ENCODE measurements at regions of chr14 and their contacts with region 1.

Region 1: DNA sequence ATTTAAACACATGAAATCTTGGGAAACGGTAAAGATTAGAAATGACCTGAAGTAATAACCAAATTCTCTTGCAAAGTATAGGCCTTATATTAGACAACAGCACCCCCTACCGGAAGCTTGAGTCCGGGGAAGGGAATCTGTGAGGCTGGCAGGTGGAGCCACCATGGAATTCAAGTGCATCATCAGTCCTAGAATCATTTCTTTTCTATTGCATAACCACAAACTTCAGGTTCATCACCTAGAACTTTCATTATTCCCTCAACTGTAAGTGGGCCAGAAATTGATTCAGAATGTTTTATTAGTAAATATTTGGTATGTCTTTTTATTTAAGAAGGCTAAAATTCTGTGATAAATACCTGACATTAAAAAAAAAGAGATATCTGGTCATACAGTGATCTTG is 48.5 kb downstream of the AP5M1 start:
- DNase-seq: peak; percentile 74
- H3K4me3 ChIP-seq: no peak overlapping the region
- H3K27ac ChIP-seq: no peak overlapping the region
- H3K4me1 ChIP-seq: no peaks in the 10 kb centered on the region
- H3K27me3 ChIP-seq: no peaks in the 10 kb centered on the region
- CTCF ChIP-seq: peak; percentile 43 to 72 (median 50)
- EP300 ChIP-seq: no peak
- POLR2A ChIP-seq: no peak

Region 2: GRCh38 chr14:56491299-56492285 is 825.7 kb before region 1 on chr14:
- intact Hi-C with region 1: loop called (anchors 2 kb)
- DNase-seq: no peak
- H3K4me3 ChIP-seq: no peak overlapping the region
- H3K27ac ChIP-seq: no peak overlapping the region
- H3K4me1 ChIP-seq: peaks cover 0 to 7% (median 0%) of the 10 kb centered on the region in 4 donors
- H3K27me3 ChIP-seq: no peaks in the 10 kb centered on the region
- CTCF ChIP-seq: peak in 3 of 4 experiments; percentile 44 to 66 (median 50)
- EP300 ChIP-seq: no peak
- POLR2A ChIP-seq: no peak

Region 3: DNA sequence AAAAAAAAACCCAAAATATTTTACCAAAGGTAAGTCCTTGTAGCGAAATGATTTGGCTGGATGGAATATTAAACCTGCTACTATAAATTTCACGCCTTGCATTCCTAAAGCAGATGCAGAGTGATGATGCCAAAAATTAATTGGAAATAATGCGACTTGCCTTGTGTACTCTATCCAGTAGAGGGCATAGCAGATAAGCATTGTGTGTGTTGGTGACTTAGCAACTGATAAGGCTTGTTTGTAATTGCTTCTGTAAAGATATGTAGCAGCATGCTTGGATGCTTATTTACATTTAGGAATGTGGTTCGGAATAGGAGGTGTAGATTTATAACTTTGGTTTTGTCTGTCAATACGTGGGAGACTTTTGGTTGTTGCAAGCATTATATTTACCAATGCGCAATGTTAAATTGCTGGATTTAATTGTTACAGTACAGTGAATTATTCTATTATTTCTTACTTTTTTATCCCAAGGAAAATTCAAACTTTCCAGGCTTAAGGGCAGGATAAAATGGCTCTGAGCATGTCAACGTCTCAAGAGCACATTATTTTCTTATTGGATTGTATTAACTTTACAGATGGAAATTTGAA is 657.3 kb before region 1 on chr14:
- intact Hi-C with region 1: loop called (anchors 10 kb)
- DNase-seq: no peak
- H3K4me3 ChIP-seq: no peak overlapping the region
- H3K27ac ChIP-seq: no peak overlapping the region
- H3K4me1 ChIP-seq: no peaks in the 10 kb centered on the region
- H3K27me3 ChIP-seq: no peaks in the 10 kb centered on the region
- CTCF ChIP-seq: peak in 1 of 4 experiments; percentile 19
- EP300 ChIP-seq: no peak
- POLR2A ChIP-seq: no peak

Measured in sigmoid colon (tissue), 7 donors.